Ovary (tissue), 10 donors: ENCODE measurements at regions of chr2 and their contacts with region 1.

Region 1: GRCh38 chr2:144801766-144802165 is 281.8 kb upstream of the ZEB2 start:
- DNase-seq: no peak
- H3K4me3 ChIP-seq: no peak overlapping the region
- H3K27ac ChIP-seq: no peak overlapping the region
- H3K4me1 ChIP-seq: no peaks in the 10 kb centered on the region
- H3K27me3 ChIP-seq: no peaks in the 10 kb centered on the region
- CTCF ChIP-seq: no peak
- EP300 ChIP-seq: no peak
- POLR2A ChIP-seq: no peak

Region 2: GRCh38 chr2:143745060-143745459 is 1056.7 kb before region 1 on chr2:
- intact Hi-C with region 1: loop called in 1 of 4 experiments (anchors 5 kb)
- DNase-seq: no peak
- H3K4me3 ChIP-seq: no peak overlapping the region
- H3K27ac ChIP-seq: no peak overlapping the region
- H3K4me1 ChIP-seq: no peaks in the 10 kb centered on the region
- H3K27me3 ChIP-seq: no peaks in the 10 kb centered on the region
- CTCF ChIP-seq: no peak
- EP300 ChIP-seq: no peak
- POLR2A ChIP-seq: no peak

Region 3: DNA sequence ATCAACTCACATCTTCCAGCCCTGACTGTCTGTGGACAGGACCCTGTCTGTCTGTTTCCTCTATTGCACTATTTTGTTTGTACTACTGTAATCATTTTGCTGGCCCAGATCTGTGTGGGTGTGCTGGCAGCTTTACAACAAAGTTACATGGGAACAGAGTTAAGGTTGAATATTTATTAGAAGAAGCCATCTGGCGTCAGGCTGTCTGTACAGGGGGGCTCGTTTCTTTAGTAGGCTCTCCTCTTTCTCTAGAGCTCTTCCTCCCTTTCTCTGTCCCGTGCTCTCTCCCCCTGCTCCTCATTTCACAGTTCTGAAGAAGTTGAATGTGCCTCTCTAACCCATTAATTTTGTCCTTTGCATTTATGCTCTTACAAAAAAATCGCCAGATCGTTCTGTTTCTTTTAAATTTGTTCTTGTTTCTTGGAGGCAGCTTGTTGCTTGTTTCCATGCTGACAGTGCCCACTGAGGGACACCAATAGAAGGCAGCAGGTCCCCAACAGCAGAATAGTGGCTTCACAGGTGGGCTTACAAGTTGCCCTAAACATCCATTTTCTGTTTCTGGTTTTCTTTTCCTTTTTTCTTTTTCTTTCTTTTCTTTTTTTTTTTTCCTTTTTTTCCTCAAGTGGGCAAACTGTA is 33.4 kb after region 1 on chr2:
- intact Hi-C with region 1: no loop called
- DNase-seq: peak; percentile 48 to 61 (median 53)
- H3K4me3 ChIP-seq: no peak overlapping the region
- H3K27ac ChIP-seq: peak overlapping the region in 1 of 2 donors; percentile 22
- H3K4me1 ChIP-seq: peaks cover 6% of the 10 kb centered on the region
- H3K27me3 ChIP-seq: no peaks in the 10 kb centered on the region
- CTCF ChIP-seq: no peak
- EP300 ChIP-seq: no peak
- POLR2A ChIP-seq: no peak